ENCODE measurements at regions of chrX and their contacts with region 1.

Region 1: DNA sequence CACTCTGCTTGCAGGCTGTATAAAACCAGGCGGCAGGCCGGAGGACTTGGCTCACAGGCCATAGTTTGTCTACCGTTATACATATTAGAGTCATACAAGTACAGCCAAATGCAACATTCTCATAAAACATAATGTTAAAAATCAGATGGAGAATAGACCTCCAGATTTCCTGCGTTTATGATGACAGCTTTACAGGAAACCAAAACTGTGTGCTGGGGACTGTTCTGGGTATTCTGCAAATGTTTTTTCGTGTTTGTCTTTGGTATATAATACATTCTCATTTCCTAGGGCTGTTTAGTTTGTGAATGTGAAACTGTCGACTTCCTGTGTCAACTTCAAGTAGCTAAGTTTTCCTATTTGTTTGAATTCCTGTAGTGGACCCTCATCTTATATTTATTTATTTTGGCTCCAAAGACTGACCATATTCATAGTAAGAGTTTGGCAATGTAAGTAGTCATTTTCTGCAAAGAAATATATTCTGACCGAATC is 79.5 kb upstream of the FAM9C start:
- DNase-seq: peak; percentile 67
- H3K4me3 Mint-ChIP-seq: peak overlapping the region; percentile 63
- H3K27ac Mint-ChIP-seq: peak overlapping the region; percentile 87
- H3K4me1 Mint-ChIP-seq: peaks cover 38% of the 10 kb centered on the region
- H3K27me3 Mint-ChIP-seq: no peaks in the 10 kb centered on the region

Region 2: GRCh38 chrX:13013363-13014110 is 110.4 kb before region 1 on chrX:
- intact Hi-C with region 1: no loop called
- DNase-seq: peak; percentile 69
- H3K4me3 Mint-ChIP-seq: peak overlapping the region; percentile 51
- H3K27ac Mint-ChIP-seq: peak overlapping the region; percentile 89
- H3K4me1 Mint-ChIP-seq: peaks cover 49% of the 10 kb centered on the region
- H3K27me3 Mint-ChIP-seq: no peaks in the 10 kb centered on the region

Region 3: DNA sequence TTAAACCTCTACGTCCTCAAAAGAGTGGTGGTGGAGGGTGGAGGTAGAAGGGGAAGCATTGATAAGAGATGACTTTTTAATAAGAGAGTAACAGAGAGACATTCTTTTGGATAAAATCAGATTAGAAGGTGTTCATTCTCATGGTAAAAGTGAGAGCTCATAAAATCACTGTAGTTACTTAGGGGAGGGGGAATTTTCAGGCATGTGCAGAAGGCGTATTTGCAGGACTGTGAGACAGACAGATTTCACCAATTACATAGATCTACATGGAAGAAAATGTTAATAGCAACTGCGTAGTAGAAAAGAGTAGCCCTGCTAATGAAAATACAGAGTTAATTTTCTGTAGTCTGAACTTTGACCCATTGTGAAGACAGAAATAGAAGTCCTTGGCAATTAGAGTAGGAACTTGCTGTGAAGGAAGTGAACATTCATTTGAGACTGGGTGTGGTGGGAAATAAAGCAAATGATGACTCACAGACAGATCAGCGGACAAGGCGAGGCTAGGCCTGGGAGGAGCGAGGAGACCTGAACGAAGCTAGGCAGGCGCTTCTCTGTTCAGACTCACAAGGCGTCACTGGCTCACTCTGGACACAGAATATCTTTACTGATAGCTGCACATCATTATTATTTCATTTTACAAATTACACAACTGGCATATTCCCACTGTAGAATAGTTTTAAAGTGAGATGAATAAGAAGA is 22.3 kb before region 1 on chrX:
- intact Hi-C with region 1: loop called (anchors 2 kb)
- DNase-seq: peak; percentile 82
- H3K4me3 Mint-ChIP-seq: peak overlapping the region; percentile 13
- H3K27ac Mint-ChIP-seq: peak overlapping the region; percentile 82
- H3K4me1 Mint-ChIP-seq: peaks cover 44% of the 10 kb centered on the region
- H3K27me3 Mint-ChIP-seq: no peaks in the 10 kb centered on the region

Measured in activated CD4-positive, alpha-beta T cell treated with anti-CD3 and anti-CD28 coated beads, Interleukin-2, amount 10 ng/mL, durations not matched to agents 24 days and 14 days (primary cell).